H1 (cell line): ENCODE measurements at regions of chr6 and their contacts with region 1.

Region 1: DNA sequence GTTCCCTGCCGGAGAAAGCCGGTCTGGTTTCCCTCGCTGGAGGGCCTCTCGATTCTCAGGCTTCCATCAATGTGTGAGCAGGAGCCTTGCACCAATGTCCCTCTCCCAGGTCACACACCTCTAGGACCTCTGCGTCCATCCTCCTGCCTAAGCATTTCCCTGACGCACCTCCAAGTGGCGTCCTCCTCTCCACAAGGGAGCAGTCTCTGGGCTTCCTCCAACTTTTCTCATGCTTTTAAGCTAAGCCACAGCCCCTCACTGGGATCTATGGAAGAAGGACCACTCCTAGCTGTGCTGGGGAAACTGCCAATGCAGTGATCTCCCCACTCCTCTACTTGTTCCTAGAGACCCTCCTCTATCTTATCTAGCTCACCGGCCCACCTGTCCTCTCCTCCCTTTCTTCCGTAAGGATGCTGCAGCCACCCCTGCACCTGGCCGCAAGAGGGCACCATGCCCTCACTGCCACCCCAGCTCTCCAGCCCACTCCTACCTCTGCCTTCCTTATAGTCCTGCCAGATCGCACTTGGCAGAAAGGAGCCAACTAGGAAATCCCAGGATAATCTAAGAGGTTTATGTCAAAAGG is 258.7 kb downstream of the LRFN2 start:
- DNase-seq: peak in 1 of 2 experiments; percentile 88
- H3K4me3 ChIP-seq: peak overlapping the region in 1 of 4 experiments; percentile 42; a peak in 1 of 8 replicates
- H3K27ac ChIP-seq: peak overlapping the region; percentile 25; the same call in 1 of the 2 replicates
- H3K4me1 ChIP-seq: peaks cover 12 to 29% (median 22%) of the 10 kb centered on the region in 4 experiments
- H3K27me3 ChIP-seq: no peaks in the 10 kb centered on the region; a peak in 1 of 7 replicates
- CTCF ChIP-seq: peak; percentile 88 to 99 (median 93)
- EP300 ChIP-seq: no peak
- POLR2A ChIP-seq: no peak
- RAD21 ChIP-seq: peak; percentile 94 to 98

Region 2: GRCh38 chr6:39980839-39981580 is 347.5 kb before region 1 on chr6:
- CTCF ChIA-PET with region 1: interaction called, 19 read pairs
- POLR2A ChIA-PET with region 1: no interaction called
- DNase-seq: peak; percentile 7 to 48
- H3K4me3 ChIP-seq: no peak overlapping the region
- H3K27ac ChIP-seq: no peak overlapping the region
- H3K4me1 ChIP-seq: peaks cover 0 to 6% (median 2%) of the 10 kb centered on the region in 4 experiments; a peak in 2 of 7 replicates
- H3K27me3 ChIP-seq: no peaks in the 10 kb centered on the region
- CTCF ChIP-seq: peak; percentile 24 to 71 (median 62)
- EP300 ChIP-seq: no peak
- POLR2A ChIP-seq: no peak
- RAD21 ChIP-seq: peak; percentile 86 to 90

Region 3: DNA sequence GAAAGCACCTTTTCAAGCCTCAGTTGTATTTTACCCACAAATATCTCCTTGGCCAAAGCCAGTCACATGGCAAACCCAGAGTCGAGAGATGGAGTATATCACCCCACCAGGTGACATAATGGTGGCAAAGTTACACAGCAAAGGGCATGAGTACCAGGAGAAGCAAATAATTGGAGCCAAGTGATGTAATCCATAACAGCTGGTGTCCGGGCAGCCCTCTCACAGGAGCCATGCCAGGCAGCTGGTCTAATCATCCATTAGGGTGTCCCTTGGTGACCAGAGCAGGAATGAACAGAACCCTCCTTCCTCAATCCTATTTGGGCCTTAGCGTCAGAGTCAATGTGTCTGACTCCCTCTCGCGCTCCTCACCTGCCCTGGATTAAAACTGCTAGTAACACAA is 13.4 kb before region 1 on chr6:
- CTCF ChIA-PET with region 1: interaction called, 13 read pairs
- POLR2A ChIA-PET with region 1: interaction called, 3 read pairs
- DNase-seq: no peak
- H3K4me3 ChIP-seq: no peak overlapping the region
- H3K27ac ChIP-seq: no peak overlapping the region
- H3K4me1 ChIP-seq: no peaks in the 10 kb centered on the region
- H3K27me3 ChIP-seq: no peaks in the 10 kb centered on the region; a peak in 1 of 7 replicates
- CTCF ChIP-seq: no peak
- EP300 ChIP-seq: no peak
- POLR2A ChIP-seq: no peak
- RAD21 ChIP-seq: no peak

Region 4: DNA sequence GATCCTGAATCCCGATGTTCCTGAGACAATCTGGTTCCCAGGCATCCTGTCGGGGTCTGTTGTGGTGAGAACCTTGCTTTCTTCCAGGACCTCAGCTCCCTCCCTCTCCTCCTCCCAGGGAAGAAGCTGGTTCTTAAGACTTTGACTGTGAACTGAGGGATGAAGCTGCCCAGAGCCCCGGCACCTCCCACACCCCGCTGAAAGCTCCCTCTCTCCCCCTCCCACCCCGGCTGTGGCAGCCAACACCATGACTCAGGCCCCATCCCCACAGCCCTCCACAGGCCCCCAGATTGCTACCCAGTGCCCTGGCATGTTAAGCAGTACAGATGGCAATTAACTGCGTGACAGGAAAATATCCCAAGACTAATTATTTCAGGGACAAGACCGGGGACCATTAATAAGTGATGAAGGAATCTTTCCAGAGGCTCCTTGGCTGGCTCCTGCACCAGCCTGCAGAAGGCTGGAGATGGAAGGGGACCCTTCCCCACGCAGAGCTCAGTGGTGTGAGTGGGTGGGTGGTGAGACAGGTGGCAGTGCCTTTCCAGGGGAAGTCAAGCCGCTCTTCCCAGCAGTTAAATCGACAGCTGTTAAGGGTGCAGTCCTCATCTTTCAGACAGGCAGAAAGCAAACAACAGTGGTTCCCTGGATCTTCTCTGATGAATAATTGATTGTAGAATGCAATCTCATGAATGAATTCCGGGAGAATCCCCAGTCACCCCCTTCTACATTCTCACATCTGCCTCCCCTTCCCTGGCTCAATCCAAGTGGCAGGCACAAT is 20.8 kb after region 1 on chr6:
- CTCF ChIA-PET with region 1: interaction called, 88 read pairs
- POLR2A ChIA-PET with region 1: interaction called, 11 read pairs
- DNase-seq: no peak
- H3K4me3 ChIP-seq: no peak overlapping the region
- H3K27ac ChIP-seq: no peak overlapping the region
- H3K4me1 ChIP-seq: peaks cover 3 to 28% (median 20%) of the 10 kb centered on the region in 4 experiments
- H3K27me3 ChIP-seq: peaks cover 0 to 2% (median 0%) of the 10 kb centered on the region in 4 experiments; a peak in 1 of 7 replicates
- CTCF ChIP-seq: no peak
- EP300 ChIP-seq: no peak
- POLR2A ChIP-seq: no peak
- RAD21 ChIP-seq: no peak

Region 5: GRCh38 chr6:40472353-40472752 is 143.9 kb after region 1 on chr6:
- CTCF ChIA-PET with region 1: interaction called, 10 read pairs
- POLR2A ChIA-PET with region 1: no interaction called
- DNase-seq: no peak
- H3K4me3 ChIP-seq: no peak overlapping the region
- H3K27ac ChIP-seq: no peak overlapping the region
- H3K4me1 ChIP-seq: peaks cover 0 to 6% (median 3%) of the 10 kb centered on the region in 4 experiments; a peak in 4 of 7 replicates
- H3K27me3 ChIP-seq: no peaks in the 10 kb centered on the region; a peak in 5 of 7 replicates
- CTCF ChIP-seq: no peak
- EP300 ChIP-seq: no peak
- POLR2A ChIP-seq: no peak
- RAD21 ChIP-seq: no peak

Region 6: DNA sequence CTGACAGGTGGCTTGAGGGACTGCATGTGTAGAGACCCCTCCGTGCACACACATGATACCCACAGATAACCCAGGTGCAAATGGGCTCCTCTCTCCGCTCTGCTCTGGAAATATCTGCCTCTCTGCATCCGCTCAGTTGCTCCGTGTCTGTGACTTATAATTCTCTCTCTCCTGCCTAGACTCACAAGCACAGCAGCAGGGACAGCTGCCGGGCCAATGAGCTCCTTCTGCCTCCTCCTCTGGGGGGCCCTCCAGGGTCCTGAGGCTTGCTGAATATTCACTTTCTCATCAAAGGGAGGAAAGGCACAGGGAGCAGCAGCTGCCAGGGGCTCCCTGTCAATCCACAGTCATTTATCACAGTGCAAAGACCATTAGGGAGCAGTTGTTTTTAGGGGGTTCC is 234.6 kb after region 1 on chr6:
- CTCF ChIA-PET with region 1: interaction called, 11 read pairs
- POLR2A ChIA-PET with region 1: no interaction called
- DNase-seq: no peak
- H3K4me3 ChIP-seq: no peak overlapping the region
- H3K27ac ChIP-seq: no peak overlapping the region
- H3K4me1 ChIP-seq: peaks cover 4 to 14% (median 7%) of the 10 kb centered on the region in 4 experiments
- H3K27me3 ChIP-seq: no peaks in the 10 kb centered on the region
- CTCF ChIP-seq: peak in 1 of 3 experiments; percentile 7; a peak in 1 of 4 replicates
- EP300 ChIP-seq: no peak
- POLR2A ChIP-seq: no peak
- RAD21 ChIP-seq: peak; percentile 0 to 23; a peak in 2 of 4 replicates

Region 7: GRCh38 chr6:40804905-40805304 is 476.4 kb after region 1 on chr6:
- CTCF ChIA-PET with region 1: interaction called, 12 read pairs
- POLR2A ChIA-PET with region 1: no interaction called
- DNase-seq: no peak
- H3K4me3 ChIP-seq: no peak overlapping the region
- H3K27ac ChIP-seq: no peak overlapping the region
- H3K4me1 ChIP-seq: peaks cover 0 to 6% (median 0%) of the 10 kb centered on the region in 4 experiments; a peak in 2 of 7 replicates
- H3K27me3 ChIP-seq: no peaks in the 10 kb centered on the region
- CTCF ChIP-seq: peak; percentile 77 to 82 (median 78)
- EP300 ChIP-seq: no peak
- POLR2A ChIP-seq: no peak
- RAD21 ChIP-seq: peak; percentile 87 to 88